Transverse colon (tissue), 4 donors: ENCODE measurements at regions of chr1 and their contacts with region 1.

Region 1: DNA sequence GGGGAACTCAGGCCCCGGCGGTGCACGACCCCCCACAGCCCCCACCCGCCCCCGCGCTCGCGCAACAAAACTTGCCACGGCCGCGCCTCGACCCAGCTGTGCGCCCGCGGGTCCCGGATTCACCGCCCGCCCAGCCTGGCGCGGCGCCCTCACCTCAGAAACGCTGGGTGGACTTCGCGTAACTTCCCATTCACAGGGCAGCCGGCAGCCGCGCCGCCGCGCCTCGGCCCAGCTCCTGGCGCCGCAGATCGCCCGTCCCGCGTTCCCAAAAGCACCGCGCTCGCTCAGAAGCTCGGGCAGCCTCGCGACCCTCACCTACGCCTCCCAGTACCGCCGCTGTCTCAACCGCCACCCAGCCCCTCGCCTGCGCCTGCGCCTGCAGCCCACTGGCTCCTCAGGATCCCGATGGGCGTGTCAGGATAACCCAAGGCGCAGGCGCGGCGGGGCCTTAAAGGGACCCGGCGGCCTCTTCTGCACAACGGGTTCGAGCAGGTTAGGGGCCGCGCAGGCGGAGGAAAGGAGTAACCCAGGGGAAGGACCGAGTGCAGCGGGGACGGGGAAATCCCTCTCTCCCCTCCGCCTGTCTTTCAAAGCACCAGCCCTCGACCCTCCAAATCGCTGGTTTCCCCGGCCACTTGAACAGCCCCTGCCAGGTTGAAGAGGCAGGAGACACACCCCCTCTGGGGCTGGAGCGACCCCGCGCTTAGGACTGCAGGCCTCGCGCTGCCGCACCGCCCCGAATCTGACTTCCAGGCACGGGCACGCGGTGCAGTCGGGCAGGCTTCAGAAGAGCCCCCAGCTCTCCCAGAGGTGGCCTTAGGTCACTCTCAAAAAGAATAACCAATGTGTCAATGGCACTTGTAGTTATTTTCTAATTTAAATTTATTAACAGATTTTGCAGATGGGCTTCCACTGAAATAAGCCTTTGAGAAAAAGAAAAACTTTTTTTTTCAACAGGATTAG is at the start of gene NBPF1:
- DNase-seq: peak; percentile 99
- H3K4me3 ChIP-seq: peak within 1 kb of the TSS; percentile 35 to 61 (median 54)
- H3K27ac ChIP-seq: peak within 1 kb of the TSS; percentile 67 to 86 (median 80)
- H3K4me1 ChIP-seq: peaks cover 9 to 25% (median 20%) of the 10 kb centered on the region in 4 donors
- H3K27me3 ChIP-seq: no peaks in the 10 kb centered on the region
- CTCF ChIP-seq: peak in 1 of 5 experiments; percentile 19
- EP300 ChIP-seq: no peak
- POLR2A ChIP-seq: peak; percentile 79
- total RNA-seq, gene NBPF1: 70.1 to 178 (median 148) TPM

Region 2: DNA sequence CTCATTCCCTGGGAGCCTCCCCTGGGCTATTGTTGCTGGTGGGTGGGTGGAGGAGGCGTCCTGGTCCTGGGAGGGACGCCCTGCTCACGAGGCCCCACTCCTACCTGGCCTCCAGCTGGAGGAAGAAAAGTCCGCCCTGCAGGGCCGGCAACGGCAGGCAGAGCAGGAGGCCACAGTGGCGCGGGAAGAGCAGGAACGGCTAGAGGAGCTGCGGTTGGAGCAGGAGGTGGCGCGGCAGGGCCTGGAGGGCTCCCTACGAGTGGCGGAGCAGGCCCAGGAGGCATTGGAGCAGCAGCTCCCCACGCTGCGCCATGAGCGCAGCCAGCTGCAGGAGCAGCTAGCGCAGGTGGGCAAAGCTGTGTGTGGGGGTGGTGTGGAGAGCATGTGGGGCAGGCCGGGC is 333.2 kb after region 1 on chr1:
- in situ Hi-C with region 1: loop called in 2 of 4 experiments (anchors 10 kb)
- intact Hi-C with region 1: no loop called
- DNase-seq: no peak
- H3K4me3 ChIP-seq: no peak overlapping the region
- H3K27ac ChIP-seq: no peak overlapping the region
- H3K4me1 ChIP-seq: peaks cover 0 to 9% (median 6%) of the 10 kb centered on the region in 4 donors
- H3K27me3 ChIP-seq: no peaks in the 10 kb centered on the region
- CTCF ChIP-seq: no peak
- EP300 ChIP-seq: no peak
- POLR2A ChIP-seq: no peak

Region 3: GRCh38 chr1:16999863-17000262 is 386.4 kb after region 1 on chr1:
- in situ Hi-C with region 1: no loop called
- intact Hi-C with region 1: no loop called
- DNase-seq: no peak
- H3K4me3 ChIP-seq: no peak overlapping the region
- H3K27ac ChIP-seq: no peak overlapping the region
- H3K4me1 ChIP-seq: no peaks in the 10 kb centered on the region
- H3K27me3 ChIP-seq: no peaks in the 10 kb centered on the region
- CTCF ChIP-seq: no peak
- EP300 ChIP-seq: no peak
- POLR2A ChIP-seq: no peak